Prostate gland (tissue), 2 donors: ENCODE measurements at regions of chr20 and their contacts with region 1.

Region 1: GRCh38 chr20:33810885-33811777 is at the start of gene CHMP4B:
- DNase-seq: peak; percentile 99
- H3K4me3 ChIP-seq: peak within 1 kb of the TSS; percentile 78 to 96
- H3K27ac ChIP-seq: peak within 1 kb of the TSS; percentile 78 to 94
- H3K4me1 ChIP-seq: no peaks in the 10 kb centered on the region
- H3K27me3 ChIP-seq: no peaks in the 10 kb centered on the region
- CTCF ChIP-seq: peak in 1 of 4 experiments; percentile 37
- POLR2A ChIP-seq: peak; percentile 87
- total RNA-seq, gene CHMP4B: 75.7 to 85.8 TPM

Region 2: GRCh38 chr20:33731693-33732165 is 79.4 kb before region 1 on chr20 and contains the start of gene ZNF341:
- intact Hi-C with region 1: loop called (anchors 5 kb)
- DNase-seq: peak; percentile 82
- H3K4me3 ChIP-seq: peak within 1 kb of the TSS; percentile 43 to 51
- H3K27ac ChIP-seq: peak within 1 kb of the TSS; percentile 93 to 94
- H3K4me1 ChIP-seq: peaks cover 8% of the 10 kb centered on the region
- H3K27me3 ChIP-seq: no peaks in the 10 kb centered on the region
- CTCF ChIP-seq: peak; percentile 71 to 93 (median 82)
- POLR2A ChIP-seq: no peak
- total RNA-seq, gene ZNF341: 2.8 to 7.0 TPM

Region 3: DNA sequence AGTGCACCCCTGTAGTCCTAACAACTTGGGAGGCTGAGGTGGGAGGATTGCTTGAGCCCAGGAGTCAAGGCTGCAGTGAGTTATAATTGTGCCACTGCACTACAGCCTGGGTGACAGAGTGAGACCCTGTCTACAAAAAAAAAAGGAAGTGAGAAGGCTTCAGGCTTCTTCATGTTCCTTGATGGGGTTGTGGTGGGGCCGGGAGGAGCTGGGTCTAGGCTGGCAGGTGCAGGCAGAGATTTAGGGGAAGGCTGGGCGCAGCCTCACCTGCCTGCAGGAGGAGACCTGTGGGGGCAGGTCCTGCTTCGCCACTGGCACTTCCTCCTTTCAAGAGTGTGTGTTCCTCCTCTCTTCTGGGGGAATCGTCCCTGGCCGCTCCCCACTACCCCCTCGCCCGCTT is 63.9 kb after region 1 on chr20:
- intact Hi-C with region 1: no loop called
- DNase-seq: no peak
- H3K4me3 ChIP-seq: no peak overlapping the region
- H3K27ac ChIP-seq: no peak overlapping the region
- H3K4me1 ChIP-seq: no peaks in the 10 kb centered on the region
- H3K27me3 ChIP-seq: no peaks in the 10 kb centered on the region
- CTCF ChIP-seq: no peak
- POLR2A ChIP-seq: no peak

Region 4: DNA sequence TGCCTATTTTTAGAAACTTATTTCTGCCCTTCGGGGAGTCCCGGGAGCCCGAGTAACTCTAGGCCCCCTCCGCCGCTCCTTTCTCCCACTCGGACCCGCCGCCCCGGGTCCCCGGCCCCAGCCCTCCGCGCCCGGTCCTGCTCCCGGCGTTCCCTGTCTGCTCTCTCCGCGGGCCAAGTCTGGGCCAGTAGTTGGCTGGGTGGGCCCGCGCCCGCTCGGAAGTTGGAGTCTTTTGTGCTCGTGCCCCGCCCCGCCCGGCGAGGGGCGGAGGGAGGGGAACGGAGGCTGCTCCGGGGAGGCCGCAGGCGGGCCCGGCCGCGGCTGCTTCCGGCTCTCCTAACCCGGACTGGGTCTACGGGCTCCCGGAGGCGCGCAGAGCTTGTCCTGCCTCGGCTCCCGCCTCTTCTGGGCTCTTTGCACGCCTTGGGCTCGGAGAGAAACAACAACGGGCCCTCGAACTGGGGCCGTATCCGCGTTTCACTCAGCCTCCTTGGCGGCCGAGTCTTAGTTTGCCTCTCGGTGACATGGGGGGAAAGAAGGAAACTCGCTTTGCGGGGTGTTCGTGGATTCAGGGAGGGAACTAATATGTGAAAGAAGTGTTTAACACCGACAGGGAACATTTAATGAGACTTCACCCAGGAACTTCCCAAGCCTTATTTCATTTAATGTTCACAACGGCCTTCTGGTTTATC is 183.2 kb after region 1 on chr20:
- intact Hi-C with region 1: loop called (anchors 2 kb)
- DNase-seq: peak; percentile 80
- H3K4me3 ChIP-seq: peak overlapping the region; percentile 89 to 94
- H3K27ac ChIP-seq: peak overlapping the region; percentile 94 to 97
- H3K4me1 ChIP-seq: peaks cover 15% of the 10 kb centered on the region
- H3K27me3 ChIP-seq: no peaks in the 10 kb centered on the region
- CTCF ChIP-seq: no peak
- POLR2A ChIP-seq: peak; percentile 31

Region 5: DNA sequence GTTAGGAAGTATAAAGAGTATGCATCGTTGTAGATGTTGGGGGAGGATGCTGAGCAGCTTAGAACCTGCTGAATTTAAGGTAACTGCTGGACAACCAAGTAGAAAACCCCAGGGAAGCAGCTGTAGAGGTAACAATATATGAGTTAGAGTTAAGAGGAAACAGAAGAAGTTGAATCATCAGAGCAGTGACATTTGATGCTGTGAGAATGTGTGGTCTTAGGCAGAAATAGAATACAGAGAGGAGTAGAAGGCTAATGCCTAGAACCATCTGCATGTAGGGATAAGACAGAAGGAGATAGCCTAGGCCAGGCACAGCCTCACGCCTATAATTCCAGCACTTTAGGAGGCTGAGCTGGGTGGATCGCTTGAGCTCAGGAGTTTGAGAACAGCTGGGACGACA is 682.5 kb after region 1 on chr20:
- intact Hi-C with region 1: no loop called
- DNase-seq: no peak
- H3K4me3 ChIP-seq: no peak overlapping the region
- H3K27ac ChIP-seq: no peak overlapping the region
- H3K4me1 ChIP-seq: no peaks in the 10 kb centered on the region
- H3K27me3 ChIP-seq: no peaks in the 10 kb centered on the region
- CTCF ChIP-seq: no peak
- POLR2A ChIP-seq: no peak